IMR-90 (cell line): ENCODE measurements at regions of chr11 and their contacts with region 1.

Region 1: GRCh38 chr11:35873721-35874120 is 70.1 kb upstream of the LDLRAD3 start:
- DNase-seq: no peak
- ATAC-seq: no peak
- H3K4me3 ChIP-seq: no peak overlapping the region
- H3K27ac ChIP-seq: no peak overlapping the region
- H3K4me1 ChIP-seq: no peaks in the 10 kb centered on the region
- H3K27me3 ChIP-seq: peaks cover 26% of the 10 kb centered on the region
- CTCF ChIP-seq: no peak
- POLR2A ChIP-seq: no peak
- RAD21 ChIP-seq: no peak

Region 2: GRCh38 chr11:35887737-35888136 is 14.0 kb after region 1 on chr11:
- CTCF ChIA-PET with region 1: interaction called, 6 read pairs
- POLR2A ChIA-PET with region 1: no interaction called
- dilution Hi-C with region 1: no loop called
- in situ Hi-C with region 1: no loop called
- intact Hi-C with region 1: loop called (anchors 2 kb)
- DNase-seq: no peak
- ATAC-seq: no peak
- H3K4me3 ChIP-seq: no peak overlapping the region
- H3K27ac ChIP-seq: no peak overlapping the region
- H3K4me1 ChIP-seq: no peaks in the 10 kb centered on the region
- H3K27me3 ChIP-seq: peaks cover 35% of the 10 kb centered on the region
- CTCF ChIP-seq: no peak
- POLR2A ChIP-seq: no peak
- RAD21 ChIP-seq: no peak

Region 3: GRCh38 chr11:35919244-35919643 is 45.5 kb after region 1 on chr11:
- CTCF ChIA-PET with region 1: no interaction called
- POLR2A ChIA-PET with region 1: no interaction called
- dilution Hi-C with region 1: no loop called
- in situ Hi-C with region 1: no loop called
- intact Hi-C with region 1: no loop called
- DNase-seq: peak; percentile 12
- ATAC-seq: peak; percentile 48
- H3K4me3 ChIP-seq: no peak overlapping the region
- H3K27ac ChIP-seq: no peak overlapping the region
- H3K4me1 ChIP-seq: no peaks in the 10 kb centered on the region
- H3K27me3 ChIP-seq: peaks cover 17% of the 10 kb centered on the region
- CTCF ChIP-seq: no peak
- POLR2A ChIP-seq: no peak
- RAD21 ChIP-seq: no peak